H1 (cell line): ENCODE measurements at regions of chr5 and their contacts with region 1.

Region 1: DNA sequence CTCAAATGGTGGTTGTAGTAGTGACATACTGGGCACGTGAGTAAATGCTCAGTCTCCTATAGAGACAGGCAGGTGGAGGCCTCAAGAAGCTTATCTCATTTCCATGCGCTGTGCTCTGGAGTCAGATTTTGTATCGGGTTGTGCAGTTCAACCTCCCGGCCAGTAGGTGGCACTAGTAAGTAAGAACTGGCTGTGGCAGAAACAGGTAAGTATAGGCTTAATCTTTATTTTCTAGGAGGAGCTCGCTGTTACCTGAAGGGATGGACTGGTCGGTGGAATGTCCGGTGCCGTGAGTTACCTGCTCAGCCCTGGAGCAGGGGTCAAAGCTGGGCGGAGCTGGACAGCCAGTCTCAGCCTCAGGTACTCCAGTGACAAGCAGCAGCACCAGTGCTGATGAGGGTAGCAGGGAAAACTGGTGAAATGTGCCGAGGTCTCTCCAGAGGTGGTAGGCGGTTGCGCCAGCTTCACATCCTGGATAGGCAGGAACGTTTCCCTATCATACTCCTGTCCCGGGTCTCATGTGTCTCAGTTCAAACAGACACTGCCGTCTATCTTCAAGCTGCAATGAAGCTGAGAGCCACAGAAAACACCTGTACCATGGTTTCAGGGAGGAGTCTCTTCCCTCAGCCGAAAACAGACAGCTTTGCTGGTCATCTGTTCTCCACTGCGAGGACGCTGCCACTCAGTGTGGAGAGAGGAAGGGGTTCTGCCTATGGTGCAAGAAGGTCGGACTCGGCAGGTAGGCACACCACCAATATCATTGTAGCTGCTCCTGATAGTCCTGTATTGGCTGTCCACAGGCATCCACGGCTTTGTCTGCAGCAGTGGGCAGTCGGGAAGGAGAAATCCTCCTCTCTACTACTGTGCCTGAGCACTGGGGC is 880.3 kb upstream of the SEMA6A start:
- DNase-seq: peak; percentile 63 to 80
- H3K4me3 ChIP-seq: peak overlapping the region; percentile 39 to 78 (median 45); a peak in 7 of 8 replicates
- H3K27ac ChIP-seq: no peak overlapping the region
- H3K4me1 ChIP-seq: no peaks in the 10 kb centered on the region
- H3K27me3 ChIP-seq: no peaks in the 10 kb centered on the region
- CTCF ChIP-seq: peak; percentile 57 to 86 (median 67)
- EP300 ChIP-seq: no peak
- POLR2A ChIP-seq: no peak
- RAD21 ChIP-seq: peak; percentile 78 to 79

Region 2: GRCh38 chr5:117054909-117055308 is 400.0 kb before region 1 on chr5:
- CTCF ChIA-PET with region 1: no interaction called
- POLR2A ChIA-PET with region 1: no interaction called
- DNase-seq: no peak
- H3K4me3 ChIP-seq: no peak overlapping the region
- H3K27ac ChIP-seq: no peak overlapping the region
- H3K4me1 ChIP-seq: peaks cover 0 to 18% (median 7%) of the 10 kb centered on the region in 4 experiments; a peak in 5 of 7 replicates
- H3K27me3 ChIP-seq: no peaks in the 10 kb centered on the region
- CTCF ChIP-seq: no peak
- EP300 ChIP-seq: no peak
- POLR2A ChIP-seq: no peak
- RAD21 ChIP-seq: no peak

Region 3: DNA sequence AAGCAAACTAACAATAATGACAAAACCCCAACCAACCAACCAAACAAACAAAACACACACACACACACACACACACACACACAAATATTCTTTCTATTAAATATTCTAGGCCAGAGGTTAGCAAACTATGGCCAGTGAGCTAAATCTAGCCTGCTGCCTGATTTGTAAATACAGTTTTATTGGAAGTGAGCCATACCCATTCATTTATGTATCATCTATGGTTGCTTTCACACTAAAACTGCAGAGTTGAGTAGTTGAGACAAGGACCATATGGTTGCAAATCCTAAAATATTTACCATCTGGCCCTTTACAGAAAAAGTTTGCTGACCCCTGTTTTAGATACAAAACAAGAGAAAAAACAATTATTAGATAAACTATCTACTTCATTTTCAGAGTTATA is 259.9 kb before region 1 on chr5:
- CTCF ChIA-PET with region 1: no interaction called
- POLR2A ChIA-PET with region 1: no interaction called
- DNase-seq: no peak
- H3K4me3 ChIP-seq: no peak overlapping the region
- H3K27ac ChIP-seq: no peak overlapping the region
- H3K4me1 ChIP-seq: no peaks in the 10 kb centered on the region
- H3K27me3 ChIP-seq: no peaks in the 10 kb centered on the region
- CTCF ChIP-seq: no peak
- EP300 ChIP-seq: no peak
- POLR2A ChIP-seq: no peak
- RAD21 ChIP-seq: no peak

Region 4: GRCh38 chr5:117299936-117300328 is 155.0 kb before region 1 on chr5:
- CTCF ChIA-PET with region 1: no interaction called
- POLR2A ChIA-PET with region 1: no interaction called
- DNase-seq: no peak
- H3K4me3 ChIP-seq: no peak overlapping the region
- H3K27ac ChIP-seq: no peak overlapping the region
- H3K4me1 ChIP-seq: no peaks in the 10 kb centered on the region
- H3K27me3 ChIP-seq: peaks cover 0 to 1% (median 0%) of the 10 kb centered on the region in 4 experiments; a peak in 1 of 7 replicates
- CTCF ChIP-seq: no peak
- EP300 ChIP-seq: no peak
- POLR2A ChIP-seq: no peak
- RAD21 ChIP-seq: no peak

Region 5: GRCh38 chr5:117425163-117425562 is 29.8 kb before region 1 on chr5:
- CTCF ChIA-PET with region 1: interaction called, 88 read pairs
- POLR2A ChIA-PET with region 1: no interaction called
- DNase-seq: no peak
- H3K4me3 ChIP-seq: no peak overlapping the region
- H3K27ac ChIP-seq: no peak overlapping the region
- H3K4me1 ChIP-seq: peaks cover 0 to 2% (median 0%) of the 10 kb centered on the region in 4 experiments; a peak in 1 of 7 replicates
- H3K27me3 ChIP-seq: no peaks in the 10 kb centered on the region
- CTCF ChIP-seq: no peak
- EP300 ChIP-seq: no peak
- POLR2A ChIP-seq: no peak
- RAD21 ChIP-seq: no peak

Region 6: GRCh38 chr5:117434254-117434653 is 20.7 kb before region 1 on chr5:
- CTCF ChIA-PET with region 1: interaction called, 88 read pairs
- POLR2A ChIA-PET with region 1: no interaction called
- DNase-seq: no peak
- H3K4me3 ChIP-seq: no peak overlapping the region
- H3K27ac ChIP-seq: no peak overlapping the region
- H3K4me1 ChIP-seq: peaks cover 0 to 5% (median 1%) of the 10 kb centered on the region in 4 experiments; a peak in 3 of 7 replicates
- H3K27me3 ChIP-seq: no peaks in the 10 kb centered on the region
- CTCF ChIP-seq: no peak
- EP300 ChIP-seq: no peak
- POLR2A ChIP-seq: no peak
- RAD21 ChIP-seq: no peak

Region 7: GRCh38 chr5:117473165-117473564 is 18.2 kb after region 1 on chr5:
- CTCF ChIA-PET with region 1: interaction called, 26 read pairs
- POLR2A ChIA-PET with region 1: no interaction called
- DNase-seq: no peak
- H3K4me3 ChIP-seq: no peak overlapping the region
- H3K27ac ChIP-seq: no peak overlapping the region
- H3K4me1 ChIP-seq: 0 out of 7 replicates have a peak, but pooled peaks cover 0 to 3% (median 0%) of the 10 kb centered on the region in 4 experiments
- H3K27me3 ChIP-seq: peaks cover 0 to 1% (median 0%) of the 10 kb centered on the region in 4 experiments; a peak in 1 of 7 replicates
- CTCF ChIP-seq: no peak
- EP300 ChIP-seq: no peak
- POLR2A ChIP-seq: no peak
- RAD21 ChIP-seq: no peak